ENCODE measurements at regions of chr10 and their contacts with region 1.

Region 1: DNA sequence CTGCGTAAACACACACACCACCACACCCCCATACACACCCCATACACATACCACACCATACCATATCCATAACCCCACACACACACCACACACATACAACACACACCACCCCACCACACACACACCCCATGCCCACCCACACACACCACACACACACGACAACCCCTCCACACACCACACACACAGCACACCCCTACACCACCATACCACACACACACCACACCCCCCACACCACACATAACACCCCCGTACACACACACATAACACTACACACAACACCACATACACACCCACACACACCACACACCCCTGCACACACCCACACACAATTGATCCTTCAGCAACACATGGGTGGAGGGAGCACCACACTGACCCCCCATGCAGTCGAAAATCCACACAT is 50.3 kb upstream of the BMS1 start:
- DNase-seq: no peak
- ATAC-seq: no peak
- H3K4me3 ChIP-seq: no peak overlapping the region
- H3K4me3 Mint-ChIP-seq: no peak overlapping the region
- H3K27ac ChIP-seq: no peak overlapping the region
- H3K27ac Mint-ChIP-seq: no peak overlapping the region
- H3K4me1 ChIP-seq: no peaks in the 10 kb centered on the region
- H3K4me1 Mint-ChIP-seq: no peaks in the 10 kb centered on the region
- H3K27me3 ChIP-seq: peaks cover 0 to 3% of the 10 kb centered on the region in 2 experiments
- H3K27me3 Mint-ChIP-seq: peaks cover 28% of the 10 kb centered on the region
- CTCF ChIP-seq: no peak

Region 2: DNA sequence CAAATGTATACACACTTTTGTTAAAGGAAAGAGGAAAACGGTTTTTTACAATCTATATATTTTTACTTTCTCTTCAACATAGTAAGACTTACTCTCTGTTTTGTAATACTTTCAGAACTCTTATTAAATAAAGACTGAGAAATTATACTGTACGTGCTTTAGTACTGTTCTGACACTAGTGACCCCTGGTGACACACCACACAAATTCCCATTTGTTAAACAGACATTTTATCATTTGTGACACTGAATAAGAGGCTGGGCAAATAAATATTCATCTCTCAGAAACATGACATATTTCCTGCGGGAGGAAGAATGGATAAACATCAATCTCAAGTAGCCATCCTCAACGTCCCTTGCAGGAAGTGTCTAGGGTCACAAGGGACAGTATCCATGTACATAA is 25.0 kb before region 1 on chr10:
- CTCF ChIA-PET with region 1: no interaction called
- POLR2A ChIA-PET with region 1: no interaction called
- intact Hi-C with region 1: loop called in 1 of 2 experiments (anchors 2 kb)
- DNase-seq: no peak
- ATAC-seq: no peak
- H3K4me3 ChIP-seq: no peak overlapping the region
- H3K4me3 Mint-ChIP-seq: no peak overlapping the region
- H3K27ac ChIP-seq: no peak overlapping the region
- H3K27ac Mint-ChIP-seq: no peak overlapping the region
- H3K4me1 ChIP-seq: no peaks in the 10 kb centered on the region
- H3K4me1 Mint-ChIP-seq: no peaks in the 10 kb centered on the region
- H3K27me3 ChIP-seq: no peaks in the 10 kb centered on the region
- H3K27me3 Mint-ChIP-seq: peaks cover 24% of the 10 kb centered on the region
- CTCF ChIP-seq: no peak

Measured in CD8-positive, alpha-beta T cell (primary cell).